ENCODE measurements at regions of chr13 and their contacts with region 1.

Region 1: GRCh38 chr13:99386911-99387788 is 80.0 kb upstream of the GPR183 start:
- DNase-seq: peak; percentile 31 to 95
- H3K4me3 ChIP-seq: no peak overlapping the region
- H3K27ac ChIP-seq: no peak overlapping the region
- H3K4me1 ChIP-seq: peaks cover 0 to 14% (median 3%) of the 10 kb centered on the region in 4 experiments; a peak in 3 of 7 replicates
- H3K27me3 ChIP-seq: no peaks in the 10 kb centered on the region
- CTCF ChIP-seq: peak; percentile 88 to 98 (median 88)
- EP300 ChIP-seq: no peak
- POLR2A ChIP-seq: no peak
- RAD21 ChIP-seq: peak; percentile 85 to 90

Region 2: GRCh38 chr13:99374994-99375737 is 12.0 kb before region 1 on chr13:
- CTCF ChIA-PET with region 1: interaction called, 31 read pairs
- POLR2A ChIA-PET with region 1: interaction called, 4 read pairs
- DNase-seq: peak in 1 of 2 experiments; percentile 43
- H3K4me3 ChIP-seq: no peak overlapping the region
- H3K27ac ChIP-seq: no peak overlapping the region
- H3K4me1 ChIP-seq: peaks cover 0 to 16% (median 2%) of the 10 kb centered on the region in 4 experiments; a peak in 6 of 7 replicates
- H3K27me3 ChIP-seq: no peaks in the 10 kb centered on the region
- CTCF ChIP-seq: no peak
- EP300 ChIP-seq: no peak
- POLR2A ChIP-seq: no peak
- RAD21 ChIP-seq: no peak

Region 3: GRCh38 chr13:99406799-99407201 is 19.6 kb after region 1 on chr13:
- CTCF ChIA-PET with region 1: interaction called, 36 read pairs
- POLR2A ChIA-PET with region 1: no interaction called
- DNase-seq: no peak
- H3K4me3 ChIP-seq: no peak overlapping the region
- H3K27ac ChIP-seq: no peak overlapping the region
- H3K4me1 ChIP-seq: no peaks in the 10 kb centered on the region; a peak in 1 of 7 replicates
- H3K27me3 ChIP-seq: peaks cover 0 to 2% (median 0%) of the 10 kb centered on the region in 4 experiments; a peak in 2 of 7 replicates
- CTCF ChIP-seq: no peak
- EP300 ChIP-seq: no peak
- POLR2A ChIP-seq: no peak
- RAD21 ChIP-seq: no peak

Region 4: GRCh38 chr13:99417201-99418102 is 30.3 kb after region 1 on chr13:
- CTCF ChIA-PET with region 1: interaction called, 36 read pairs
- POLR2A ChIA-PET with region 1: no interaction called
- DNase-seq: no peak
- H3K4me3 ChIP-seq: peak overlapping the region in 1 of 4 experiments; percentile 1; a peak in 1 of 8 replicates
- H3K27ac ChIP-seq: no peak overlapping the region
- H3K4me1 ChIP-seq: peaks cover 0 to 13% (median 9%) of the 10 kb centered on the region in 4 experiments; a peak in 5 of 7 replicates
- H3K27me3 ChIP-seq: no peaks in the 10 kb centered on the region
- CTCF ChIP-seq: no peak
- EP300 ChIP-seq: no peak
- POLR2A ChIP-seq: no peak
- RAD21 ChIP-seq: no peak

Region 5: GRCh38 chr13:99459099-99459850 is 72.1 kb after region 1 on chr13:
- CTCF ChIA-PET with region 1: interaction called, 11 read pairs
- POLR2A ChIA-PET with region 1: no interaction called
- DNase-seq: no peak
- H3K4me3 ChIP-seq: no peak overlapping the region
- H3K27ac ChIP-seq: no peak overlapping the region
- H3K4me1 ChIP-seq: no peaks in the 10 kb centered on the region
- H3K27me3 ChIP-seq: no peaks in the 10 kb centered on the region
- CTCF ChIP-seq: peak in 1 of 3 experiments; percentile 23; a peak in 1 of 4 replicates
- EP300 ChIP-seq: no peak
- POLR2A ChIP-seq: no peak
- RAD21 ChIP-seq: peak in 1 of 2 experiments; percentile 22; a peak in 1 of 4 replicates

Region 6: DNA sequence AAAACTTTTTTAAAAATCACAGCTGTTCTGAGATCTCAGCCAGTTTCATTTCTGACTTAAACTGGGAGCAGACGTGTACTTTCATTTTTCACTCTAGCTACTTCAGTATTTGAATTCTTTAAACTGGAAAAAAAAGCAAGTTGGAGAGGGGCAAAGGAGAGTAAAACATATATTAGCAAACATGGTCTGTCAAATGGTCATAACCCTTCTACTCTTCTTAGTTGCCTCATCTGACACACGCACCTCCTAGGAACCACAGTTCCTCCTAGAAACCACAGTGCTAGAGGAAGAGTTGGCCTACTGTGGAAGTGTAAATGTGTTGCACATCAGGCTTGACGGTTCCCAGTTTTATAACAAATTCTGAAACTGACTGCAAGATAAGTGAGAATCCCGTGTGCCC is 161.3 kb after region 1 on chr13:
- CTCF ChIA-PET with region 1: no interaction called
- POLR2A ChIA-PET with region 1: no interaction called
- DNase-seq: no peak
- H3K4me3 ChIP-seq: no peak overlapping the region
- H3K27ac ChIP-seq: no peak overlapping the region
- H3K4me1 ChIP-seq: no peaks in the 10 kb centered on the region
- H3K27me3 ChIP-seq: no peaks in the 10 kb centered on the region
- CTCF ChIP-seq: no peak
- EP300 ChIP-seq: no peak
- POLR2A ChIP-seq: no peak
- RAD21 ChIP-seq: no peak

Measured in H1 (cell line).